Breast epithelium (tissue), 4 donors: ENCODE measurements at regions of chr9 and their contacts with region 1.

Region 1: DNA sequence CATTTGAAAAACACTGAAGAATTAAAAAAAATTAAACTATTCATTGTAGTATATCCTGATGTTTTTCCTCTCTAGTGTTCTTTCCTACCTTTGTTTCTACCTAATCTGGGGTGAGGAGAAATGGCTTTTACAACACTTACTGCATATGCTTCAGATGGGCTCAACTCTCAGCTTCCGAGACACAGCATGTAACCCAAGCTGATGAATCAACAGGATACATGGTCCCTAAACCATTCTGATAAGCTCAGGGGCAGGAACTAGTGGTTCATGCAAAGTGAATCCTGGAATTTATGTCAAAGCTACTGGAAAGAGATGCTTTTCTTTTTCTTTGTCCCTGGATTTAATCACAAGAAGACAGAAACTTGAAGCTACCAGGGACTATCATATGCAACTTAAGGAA is 672.5 kb upstream of the RORB start:
- DNase-seq: no peak
- H3K4me3 ChIP-seq: no peak overlapping the region
- H3K27ac ChIP-seq: no peak overlapping the region
- H3K4me1 ChIP-seq: no peaks in the 10 kb centered on the region
- H3K27me3 ChIP-seq: no peaks in the 10 kb centered on the region
- CTCF ChIP-seq: no peak
- POLR2A ChIP-seq: no peak

Region 2: GRCh38 chr9:73845539-73845938 is 20.9 kb after region 1 on chr9:
- intact Hi-C with region 1: loop called (anchors 2 kb)
- DNase-seq: no peak
- H3K4me3 ChIP-seq: no peak overlapping the region
- H3K27ac ChIP-seq: no peak overlapping the region
- H3K4me1 ChIP-seq: no peaks in the 10 kb centered on the region
- H3K27me3 ChIP-seq: no peaks in the 10 kb centered on the region
- CTCF ChIP-seq: no peak
- POLR2A ChIP-seq: no peak